B cell (primary cell): ENCODE measurements at regions of chr4 and their contacts with region 1.

Region 1: DNA sequence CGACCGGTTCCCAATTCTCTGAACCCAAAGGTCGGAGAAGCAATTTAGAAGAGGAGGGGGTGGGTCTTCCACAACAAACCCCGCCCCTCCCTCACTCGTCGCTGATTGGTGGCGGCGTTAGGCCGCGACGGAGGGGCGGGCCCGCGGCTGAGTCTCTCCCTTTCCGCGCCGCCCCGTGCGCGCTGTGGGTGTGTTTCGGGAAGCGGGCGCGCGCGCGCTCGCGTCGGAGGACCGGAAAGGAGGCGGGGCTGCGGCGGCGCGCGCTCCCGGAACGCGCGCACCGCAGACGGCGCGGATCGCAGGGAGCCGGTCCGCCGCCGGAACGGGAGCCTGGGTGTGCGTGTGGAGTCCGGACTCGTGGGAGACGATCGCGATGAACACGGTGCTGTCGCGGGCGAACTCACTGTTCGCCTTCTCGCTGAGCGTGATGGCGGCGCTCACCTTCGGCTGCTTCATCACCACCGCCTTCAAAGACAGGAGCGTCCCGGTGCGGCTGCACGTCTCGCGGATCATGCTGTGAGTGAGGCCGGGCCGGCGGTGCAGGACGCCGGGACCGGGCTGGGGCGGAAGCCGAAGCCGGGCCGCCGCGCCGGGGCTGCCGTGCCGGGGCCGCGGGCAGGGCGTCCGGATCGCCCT is at the start of gene SPCS3:
- DNase-seq: peak; percentile 97
- ATAC-seq: peak; percentile 91
- H3K4me3 ChIP-seq: peak within 1 kb of the TSS; percentile 77 to 91 (median 84)
- H3K4me3 Mint-ChIP-seq: peak within 1 kb of the TSS; percentile 93
- H3K27ac ChIP-seq: peak within 1 kb of the TSS; percentile 84 to 95
- H3K27ac Mint-ChIP-seq: peak within 1 kb of the TSS; percentile 97
- H3K4me1 ChIP-seq: peaks cover 21 to 44% of the 10 kb centered on the region in 2 donors
- H3K4me1 Mint-ChIP-seq: peaks cover 43% of the 10 kb centered on the region
- H3K27me3 ChIP-seq: no peaks in the 10 kb centered on the region
- H3K27me3 Mint-ChIP-seq: no peaks in the 10 kb centered on the region
- CTCF ChIP-seq: no peak
- total RNA-seq, gene SPCS3: 92.4 and 102 TPM in 2 replicates

Region 2: DNA sequence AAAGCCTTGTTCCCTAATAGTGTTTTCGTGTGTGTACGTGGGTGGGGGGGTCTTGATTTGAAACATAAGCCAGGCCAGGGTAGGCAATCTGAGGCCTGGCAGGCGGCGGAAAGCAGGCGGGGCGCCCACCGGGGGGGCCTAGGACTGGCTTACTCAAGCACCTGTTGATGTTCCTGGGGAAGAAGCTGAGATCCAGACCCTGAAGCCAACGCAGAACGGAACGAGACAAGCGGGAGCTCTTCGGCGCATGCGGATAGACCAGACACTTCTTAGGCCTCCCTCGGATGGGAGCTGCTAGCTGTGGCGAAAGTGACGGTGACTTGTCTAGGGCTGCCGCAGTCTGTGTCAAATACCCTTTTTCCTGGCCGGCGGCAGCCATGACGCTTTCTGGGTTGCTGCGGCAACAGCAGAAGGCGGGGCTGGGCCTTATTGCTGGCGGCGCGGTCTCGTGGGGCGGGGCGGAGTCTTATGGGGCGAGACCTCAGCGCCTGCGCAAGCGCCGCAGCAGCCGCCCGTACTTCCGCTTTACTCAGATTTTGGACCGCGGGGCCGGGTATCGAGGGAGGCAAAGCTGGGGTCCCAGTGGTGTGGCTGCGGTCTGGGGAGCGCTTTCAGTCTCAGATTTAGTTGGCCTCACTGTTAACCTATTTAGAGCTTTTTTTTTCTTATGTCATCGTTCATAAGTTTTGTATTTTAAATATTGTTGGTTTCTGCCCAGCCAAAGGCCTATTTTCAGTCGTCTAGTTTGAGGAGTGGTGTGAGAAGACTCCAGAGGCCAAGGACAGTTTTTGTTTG is 124.4 kb before region 1 on chr4 and contains the start of gene SPATA4:
- CTCF ChIA-PET with region 1: interaction called, 4 read pairs
- POLR2A ChIA-PET with region 1: interaction called, 3 read pairs
- intact Hi-C with region 1: loop called (anchors 1 kb)
- DNase-seq: peak; percentile 96
- ATAC-seq: peak; percentile 98
- H3K4me3 ChIP-seq: peak within 1 kb of the TSS; percentile 53 to 77 (median 63)
- H3K4me3 Mint-ChIP-seq: peak within 1 kb of the TSS; percentile 94
- H3K27ac ChIP-seq: peak within 1 kb of the TSS; percentile 65 to 73
- H3K27ac Mint-ChIP-seq: peak within 1 kb of the TSS; percentile 87
- H3K4me1 ChIP-seq: peaks cover 9 to 10% of the 10 kb centered on the region in 2 donors
- H3K4me1 Mint-ChIP-seq: peaks cover 9% of the 10 kb centered on the region
- H3K27me3 ChIP-seq: peaks cover 0 to 22% (median 14%) of the 10 kb centered on the region in 4 experiments
- H3K27me3 Mint-ChIP-seq: peaks cover 44% of the 10 kb centered on the region
- CTCF ChIP-seq: no peak
- total RNA-seq, gene SPATA4: not detected in 2 replicates

Region 3: DNA sequence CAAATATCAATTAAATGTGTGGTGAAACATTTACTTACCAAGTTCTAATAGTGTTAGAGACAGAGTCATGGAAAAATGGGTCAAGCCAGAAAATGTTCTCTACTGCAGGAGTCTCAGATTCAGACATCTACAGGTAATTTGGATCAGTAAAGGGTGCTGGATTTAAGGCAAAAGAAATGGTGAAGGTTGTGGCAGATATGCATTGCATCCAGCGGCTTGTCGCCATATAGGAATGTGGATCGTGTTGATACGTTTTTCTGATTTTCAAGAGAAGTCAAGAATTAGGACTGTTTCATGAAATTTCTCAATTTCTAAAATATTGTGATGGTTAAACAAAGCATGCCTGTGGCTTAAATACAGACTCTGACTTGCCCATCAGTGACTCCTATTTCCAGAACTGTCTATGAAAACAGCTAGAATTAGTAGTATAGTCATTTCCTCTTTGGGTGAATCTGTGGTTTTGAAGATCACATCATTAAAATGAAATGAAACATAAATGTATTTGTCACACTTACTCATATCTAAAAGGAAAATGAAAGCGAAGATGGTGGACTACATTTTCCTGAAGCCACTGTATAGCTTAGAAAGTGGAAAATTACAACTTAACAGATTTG is 583.0 kb after region 1 on chr4:
- CTCF ChIA-PET with region 1: no interaction called
- POLR2A ChIA-PET with region 1: no interaction called
- intact Hi-C with region 1: no loop called
- DNase-seq: no peak
- ATAC-seq: no peak
- H3K4me3 ChIP-seq: no peak overlapping the region
- H3K4me3 Mint-ChIP-seq: no peak overlapping the region
- H3K27ac ChIP-seq: no peak overlapping the region
- H3K27ac Mint-ChIP-seq: no peak overlapping the region
- H3K4me1 ChIP-seq: no peaks in the 10 kb centered on the region
- H3K4me1 Mint-ChIP-seq: no peaks in the 10 kb centered on the region
- H3K27me3 ChIP-seq: no peaks in the 10 kb centered on the region
- H3K27me3 Mint-ChIP-seq: no peaks in the 10 kb centered on the region
- CTCF ChIP-seq: no peak